MCF 10A (cell line): ENCODE measurements at regions of chr5 and their contacts with region 1.

Region 1: GRCh38 chr5:122182491-122182921 is 53.2 kb downstream of the ZNF474 start:
- DNase-seq: peak; percentile 96
- H3K4me3 Mint-ChIP-seq: peak overlapping the region; percentile 62
- H3K27ac Mint-ChIP-seq: peak overlapping the region; percentile 85
- H3K4me1 Mint-ChIP-seq: peaks cover 43% of the 10 kb centered on the region
- H3K27me3 Mint-ChIP-seq: no peaks in the 10 kb centered on the region
- CTCF ChIP-seq: no peak

Region 2: GRCh38 chr5:122076664-122077365 is 105.7 kb before region 1 on chr5:
- CTCF ChIA-PET with region 1: interaction called, 5 read pairs
- POLR2A ChIA-PET with region 1: interaction called, 10 read pairs
- intact Hi-C with region 1: no loop called
- DNase-seq: peak; percentile 94
- H3K4me3 Mint-ChIP-seq: peak overlapping the region; percentile 94
- H3K27ac Mint-ChIP-seq: peak overlapping the region; percentile 74
- H3K4me1 Mint-ChIP-seq: peaks cover 24% of the 10 kb centered on the region
- H3K27me3 Mint-ChIP-seq: no peaks in the 10 kb centered on the region
- CTCF ChIP-seq: peak; percentile 96

Region 3: DNA sequence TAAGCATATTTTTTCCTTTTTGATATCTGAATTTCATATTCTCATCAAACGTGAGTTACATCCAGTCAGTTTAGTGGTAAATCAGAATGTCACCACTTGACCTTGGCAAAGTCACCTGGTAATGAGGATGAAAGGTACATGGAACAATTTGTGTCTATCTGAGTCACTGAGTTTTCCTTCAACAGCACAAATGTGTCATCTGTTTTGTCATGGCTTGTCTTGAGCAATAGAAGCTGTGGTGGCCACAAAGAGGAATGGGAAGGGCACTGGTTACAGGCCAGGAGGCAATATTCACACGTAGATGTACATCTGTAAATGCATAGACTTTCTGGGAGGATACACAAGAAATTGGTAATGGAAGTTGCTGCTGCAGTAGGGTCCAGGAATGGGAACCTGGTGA is 61.5 kb before region 1 on chr5:
- CTCF ChIA-PET with region 1: interaction called, 11 read pairs
- POLR2A ChIA-PET with region 1: interaction called, 45 read pairs
- intact Hi-C with region 1: no loop called
- DNase-seq: peak; percentile 71
- H3K4me3 Mint-ChIP-seq: peak overlapping the region; percentile 45
- H3K27ac Mint-ChIP-seq: peak overlapping the region; percentile 90
- H3K4me1 Mint-ChIP-seq: peaks cover 30% of the 10 kb centered on the region
- H3K27me3 Mint-ChIP-seq: no peaks in the 10 kb centered on the region
- CTCF ChIP-seq: no peak

Region 4: DNA sequence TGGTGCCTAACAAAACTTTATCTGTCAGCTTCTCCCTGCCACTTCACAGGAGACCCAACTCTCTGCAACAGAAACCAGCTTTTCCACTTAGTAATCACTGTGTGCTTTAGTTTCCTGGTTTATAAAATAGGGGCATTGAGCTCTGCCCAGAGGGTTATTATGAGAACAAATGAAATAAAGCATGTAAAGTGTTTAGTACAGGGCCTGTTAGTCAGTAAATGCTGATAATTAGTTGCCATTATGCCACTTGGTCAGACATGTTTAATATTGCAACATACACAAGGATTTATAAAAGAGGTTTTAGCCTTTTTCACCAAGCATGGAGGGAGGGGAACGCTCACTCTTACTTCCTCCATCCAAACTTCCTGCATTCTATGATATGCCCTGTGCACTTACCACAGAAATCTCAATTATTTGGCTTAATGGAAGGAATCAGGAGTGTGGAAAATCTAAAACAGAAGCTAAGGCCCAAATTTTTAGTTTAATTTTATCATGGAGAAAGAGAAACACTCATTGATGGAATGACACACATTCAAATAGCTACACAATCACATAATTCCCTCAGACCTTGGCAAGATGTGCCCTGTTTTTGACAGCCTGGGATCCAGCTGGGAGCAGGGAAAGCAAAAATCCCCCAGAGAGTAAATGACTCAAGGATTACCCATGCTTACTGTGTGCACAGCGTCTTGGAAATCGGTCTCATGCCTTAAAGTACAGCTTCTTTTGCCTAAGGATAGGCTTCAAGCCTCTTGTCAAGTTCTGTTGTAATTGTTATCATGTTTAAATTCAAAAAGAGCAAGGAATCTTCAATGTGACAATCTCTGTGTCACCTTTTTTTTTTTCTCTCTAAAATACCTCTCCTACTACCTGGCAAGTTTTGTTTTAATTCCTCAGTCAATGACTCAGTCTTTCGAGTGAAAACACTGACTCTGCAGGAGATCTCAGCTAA is 19.1 kb before region 1 on chr5:
- CTCF ChIA-PET with region 1: interaction called, 23 read pairs
- POLR2A ChIA-PET with region 1: interaction called, 140 read pairs
- intact Hi-C with region 1: no loop called
- DNase-seq: peak; percentile 92
- H3K4me3 Mint-ChIP-seq: peak overlapping the region; percentile 22
- H3K27ac Mint-ChIP-seq: peak overlapping the region; percentile 81
- H3K4me1 Mint-ChIP-seq: peaks cover 23% of the 10 kb centered on the region
- H3K27me3 Mint-ChIP-seq: no peaks in the 10 kb centered on the region
- CTCF ChIP-seq: no peak

Region 5: DNA sequence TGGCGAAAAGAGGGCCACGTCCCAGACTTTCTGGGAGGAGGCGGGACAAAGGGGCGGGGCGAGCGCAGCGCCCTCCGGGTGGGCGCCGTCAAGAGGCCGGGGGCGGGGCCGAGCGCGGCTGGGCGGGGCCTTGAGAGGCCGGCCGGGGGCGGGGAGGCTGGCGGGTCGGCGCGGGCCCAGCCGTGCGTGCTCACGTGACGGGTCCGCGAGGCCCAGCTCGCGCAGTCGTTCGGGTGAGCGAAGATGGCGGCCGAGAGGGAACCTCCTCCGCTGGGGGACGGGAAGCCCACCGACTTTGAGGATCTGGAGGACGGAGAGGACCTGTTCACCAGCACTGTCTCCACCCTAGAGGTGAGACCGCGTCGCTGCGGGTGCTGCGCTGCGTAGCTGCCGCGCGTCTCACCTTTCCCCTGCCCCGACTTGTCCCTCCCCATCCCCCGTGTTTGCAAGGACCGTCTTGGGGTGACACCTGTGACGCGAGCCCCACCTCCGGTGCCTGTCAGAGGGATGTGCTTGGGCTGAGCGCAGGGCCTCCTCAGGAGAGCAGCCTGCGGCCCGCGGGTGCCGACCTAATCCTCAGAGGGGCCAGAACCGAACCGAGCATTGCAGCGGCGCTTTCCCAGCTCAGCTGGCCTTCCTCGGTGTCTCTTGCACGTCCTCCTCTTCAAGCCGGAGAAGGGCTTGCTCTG is 592.5 kb after region 1 on chr5 and contains the start of gene SNX2:
- CTCF ChIA-PET with region 1: no interaction called
- POLR2A ChIA-PET with region 1: interaction called, 12 read pairs
- intact Hi-C with region 1: no loop called
- DNase-seq: peak; percentile 92
- H3K4me3 Mint-ChIP-seq: peak within 1 kb of the TSS; percentile 94
- H3K27ac Mint-ChIP-seq: peak within 1 kb of the TSS; percentile 95
- H3K4me1 Mint-ChIP-seq: peaks cover 30% of the 10 kb centered on the region
- H3K27me3 Mint-ChIP-seq: no peaks in the 10 kb centered on the region
- CTCF ChIP-seq: peak; percentile 32
- total RNA-seq, gene SNX2: 94.9 and 120 TPM in 2 replicates

Region 6: DNA sequence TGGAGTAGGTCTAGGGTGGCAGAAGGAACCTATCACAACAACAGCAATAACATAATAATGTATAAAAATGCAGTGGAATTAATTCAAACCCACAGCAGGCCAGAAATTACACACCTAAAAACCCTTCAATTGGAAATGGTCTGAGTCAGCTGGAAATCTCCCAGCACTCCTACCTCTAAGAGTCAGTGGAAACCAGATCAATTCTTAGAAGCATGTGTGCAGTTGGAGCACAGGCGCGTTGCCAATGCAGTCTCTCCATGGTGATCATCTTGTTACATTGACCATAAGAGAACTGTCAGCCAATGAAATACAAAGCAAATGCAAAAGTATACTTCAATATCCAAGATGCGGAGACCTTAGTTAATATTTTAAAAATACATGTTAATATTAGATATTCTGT is 1314.4 kb after region 1 on chr5:
- CTCF ChIA-PET with region 1: no interaction called
- POLR2A ChIA-PET with region 1: no interaction called
- intact Hi-C with region 1: loop called (anchors 5 kb)
- DNase-seq: peak; percentile 70
- H3K4me3 Mint-ChIP-seq: peak overlapping the region; percentile 32
- H3K27ac Mint-ChIP-seq: peak overlapping the region; percentile 74
- H3K4me1 Mint-ChIP-seq: peaks cover 23% of the 10 kb centered on the region
- H3K27me3 Mint-ChIP-seq: no peaks in the 10 kb centered on the region
- CTCF ChIP-seq: no peak